ENCODE measurements at regions of chr12 and their contacts with region 1.

Region 1: GRCh38 chr12:49322708-49323523 is at the start of gene TROAP:
- DNase-seq: peak; percentile 98
- ATAC-seq: peak; percentile 96
- H3K4me3 Mint-ChIP-seq: peak within 1 kb of the TSS; percentile 100
- H3K27ac Mint-ChIP-seq: peak within 1 kb of the TSS; percentile 92
- H3K4me1 Mint-ChIP-seq: peaks cover 10% of the 10 kb centered on the region
- H3K27me3 Mint-ChIP-seq: no peaks in the 10 kb centered on the region
- CTCF ChIP-seq: no peak
- total RNA-seq, gene TROAP: 46.6 to 52.6 TPM

Region 2: DNA sequence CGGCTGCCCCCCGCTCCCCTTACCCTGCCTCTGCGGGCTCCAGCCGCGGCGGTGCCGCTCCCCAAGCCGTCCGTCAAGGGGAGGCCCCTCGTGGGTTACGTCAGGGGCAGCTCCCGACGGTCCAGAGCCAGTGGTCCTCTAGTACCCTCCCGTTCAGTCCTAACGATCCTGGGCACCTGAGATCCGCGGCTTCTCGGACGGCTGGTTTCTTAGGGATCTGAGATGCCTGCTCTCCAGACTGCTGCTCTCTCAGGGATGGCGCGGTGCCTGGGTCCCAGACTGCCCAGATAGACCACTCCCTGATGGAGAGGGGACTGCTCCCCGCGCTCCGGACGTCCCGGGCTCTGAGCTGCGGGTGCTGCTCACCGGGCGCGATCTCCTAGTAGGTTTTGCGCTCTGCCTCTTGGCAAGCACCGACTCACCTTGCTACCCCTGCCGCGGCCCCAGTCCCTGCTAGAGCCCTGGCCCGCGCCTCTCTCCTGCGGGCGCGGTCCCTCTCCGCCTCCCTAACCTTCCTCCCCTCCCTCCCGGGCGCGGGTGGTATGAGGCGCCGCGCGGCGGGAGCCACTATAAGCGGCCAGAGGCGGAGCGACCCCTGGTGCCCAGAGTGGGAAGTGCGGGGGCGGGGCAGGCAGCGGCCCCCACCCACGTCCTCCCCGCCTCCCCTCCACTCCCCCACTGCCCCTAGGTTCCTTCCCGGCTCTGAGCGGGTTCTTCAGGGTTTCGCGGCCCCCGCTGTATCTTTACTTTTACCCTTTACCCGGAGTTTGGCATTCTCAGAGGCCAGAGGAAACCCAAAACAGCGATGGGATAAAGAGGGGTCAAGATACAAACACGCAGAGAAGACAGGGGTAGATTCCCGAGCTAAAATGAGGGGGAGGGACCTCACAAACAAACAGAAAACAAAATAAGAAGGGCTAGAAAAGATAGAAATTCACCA is 14.0 kb after region 1 on chr12 and contains the start of gene C1QL4:
- CTCF ChIA-PET with region 1: interaction called, 42 read pairs
- POLR2A ChIA-PET with region 1: interaction called, 17 read pairs
- intact Hi-C with region 1: no loop called
- DNase-seq: peak; percentile 90
- ATAC-seq: peak; percentile 89
- H3K4me3 Mint-ChIP-seq: peak within 1 kb of the TSS; percentile 35
- H3K27ac Mint-ChIP-seq: no peak within 1 kb of the TSS
- H3K4me1 Mint-ChIP-seq: peaks cover 15% of the 10 kb centered on the region
- H3K27me3 Mint-ChIP-seq: peaks cover 71% of the 10 kb centered on the region
- CTCF ChIP-seq: peak; percentile 96
- total RNA-seq, gene C1QL4: not detected